WTC11 (cell line): ENCODE measurements at regions of chr1 and their contacts with region 1.

Region 1: GRCh38 chr1:245045087-245045881 is 109.5 kb upstream of the KIF26B start:
- DNase-seq: peak; percentile 17
- ATAC-seq: peak; percentile 66
- H3K4me3 Mint-ChIP-seq: no peak overlapping the region
- H3K27ac Mint-ChIP-seq: peak overlapping the region; percentile 33; the same call in 1 of the 2 replicates
- H3K4me1 Mint-ChIP-seq: peaks cover 36% of the 10 kb centered on the region
- H3K27me3 Mint-ChIP-seq: no peaks in the 10 kb centered on the region
- CTCF ChIP-seq: no peak

Region 2: DNA sequence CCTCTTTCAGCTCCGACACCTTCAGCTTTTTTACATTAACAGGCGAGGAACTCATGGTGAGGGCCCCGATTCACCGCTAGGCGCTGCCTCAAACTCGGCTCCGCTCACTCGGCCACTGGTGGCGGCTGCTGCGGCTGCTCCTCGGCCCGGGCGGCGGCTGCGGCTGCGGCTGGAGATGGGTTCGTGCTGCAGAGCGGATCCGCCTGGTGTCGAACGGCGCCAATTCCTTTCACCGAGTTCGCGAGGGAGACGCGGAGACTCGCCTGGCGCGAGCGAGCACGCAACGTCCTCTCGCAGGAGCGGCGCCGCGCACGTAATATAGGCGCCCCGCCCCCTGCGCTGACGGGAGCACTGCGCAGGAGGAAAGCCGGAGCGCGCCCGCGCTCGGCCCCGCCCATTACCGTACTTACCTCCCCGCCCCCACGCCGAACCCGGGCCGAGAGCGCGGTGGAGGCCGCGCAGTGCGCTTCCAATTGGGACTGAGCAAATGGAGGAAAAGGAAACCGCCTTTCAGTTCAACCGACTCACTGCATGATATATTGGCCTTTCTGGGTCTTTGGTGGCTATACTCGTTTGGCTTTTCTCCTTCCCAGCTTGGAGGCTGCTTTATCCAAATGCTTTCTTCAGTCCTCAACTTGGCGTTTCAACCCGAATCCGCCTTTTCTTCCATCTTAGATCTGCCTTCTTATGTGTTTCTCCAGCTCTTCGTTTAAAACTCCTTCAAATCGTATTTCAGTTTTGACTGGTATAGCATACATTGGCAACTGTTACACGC is 180.8 kb before region 1 on chr1 and contains the start of gene HNRNPU:
- CTCF ChIA-PET with region 1: interaction called, 37 read pairs
- POLR2A ChIA-PET with region 1: interaction called, 3 read pairs
- DNase-seq: peak; percentile 97
- ATAC-seq: peak; percentile 86
- H3K4me3 Mint-ChIP-seq: peak within 1 kb of the TSS; percentile 87
- H3K27ac Mint-ChIP-seq: peak within 1 kb of the TSS; percentile 99
- H3K4me1 Mint-ChIP-seq: peaks cover 48% of the 10 kb centered on the region
- H3K27me3 Mint-ChIP-seq: no peaks in the 10 kb centered on the region
- CTCF ChIP-seq: no peak; the same call in 1 of the 2 replicates
- total RNA-seq, gene HNRNPU: 477 to 536 TPM (median 477 TPM) in 3 replicates

Region 3: DNA sequence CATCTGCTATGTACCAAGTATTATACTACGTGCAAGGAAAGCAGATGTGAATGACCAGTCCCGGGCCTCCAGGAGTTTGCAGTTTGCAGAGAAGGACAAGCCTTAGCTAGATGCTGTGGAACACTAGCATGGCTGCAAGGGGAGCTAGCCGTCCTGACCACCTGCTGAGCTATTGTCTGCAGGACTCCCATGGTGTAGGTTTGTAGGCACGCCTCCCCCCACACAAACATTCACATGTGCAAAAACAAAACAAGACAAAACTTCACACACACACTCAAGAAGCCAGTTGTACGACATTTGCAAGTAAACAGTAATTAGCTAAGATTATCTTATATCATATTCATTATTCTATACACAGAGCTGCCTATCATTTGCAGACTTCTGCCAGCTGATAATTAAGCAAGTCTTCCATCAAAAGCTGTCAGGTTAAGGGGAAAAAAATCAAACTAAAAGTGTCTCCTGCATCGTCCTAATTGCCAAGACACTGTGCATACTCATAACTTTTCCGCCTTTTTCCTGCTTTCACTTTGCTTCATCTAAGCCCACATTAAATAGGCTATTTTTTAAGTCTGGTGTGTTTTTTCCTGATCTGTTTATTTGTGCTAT is 170.2 kb before region 1 on chr1:
- CTCF ChIA-PET with region 1: interaction called, 13 read pairs
- POLR2A ChIA-PET with region 1: no interaction called
- DNase-seq: peak; percentile 80
- ATAC-seq: peak; percentile 75
- H3K4me3 Mint-ChIP-seq: no peak overlapping the region
- H3K27ac Mint-ChIP-seq: no peak overlapping the region
- H3K4me1 Mint-ChIP-seq: peaks cover 17% of the 10 kb centered on the region
- H3K27me3 Mint-ChIP-seq: no peaks in the 10 kb centered on the region
- CTCF ChIP-seq: no peak

Region 4: DNA sequence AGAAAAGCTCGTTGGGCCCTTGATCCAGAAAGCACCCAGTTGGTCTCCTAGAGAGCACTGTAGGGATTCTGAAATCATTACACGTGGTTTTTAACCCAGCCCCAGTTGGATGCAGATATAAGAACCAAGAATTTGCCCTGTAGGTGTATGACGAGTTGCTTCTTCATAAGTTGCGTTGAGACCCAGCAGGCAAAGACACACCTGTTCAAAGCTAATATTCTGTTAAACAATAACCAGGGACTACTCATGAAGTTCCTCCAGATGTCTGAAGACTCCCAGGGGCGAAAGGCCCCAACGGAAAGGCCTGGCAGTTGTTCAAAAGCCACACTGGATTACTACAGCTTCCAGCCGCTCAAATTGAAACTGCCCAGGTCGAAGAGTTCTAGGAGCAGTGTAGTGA is 92.3 kb before region 1 on chr1:
- CTCF ChIA-PET with region 1: no interaction called
- POLR2A ChIA-PET with region 1: no interaction called
- DNase-seq: no peak
- ATAC-seq: no peak
- H3K4me3 Mint-ChIP-seq: no peak overlapping the region
- H3K27ac Mint-ChIP-seq: no peak overlapping the region
- H3K4me1 Mint-ChIP-seq: 0 out of 2 replicates have a peak, but pooled peaks cover 3% of the 10 kb centered on the region
- H3K27me3 Mint-ChIP-seq: no peaks in the 10 kb centered on the region
- CTCF ChIP-seq: no peak

Region 5: GRCh38 chr1:244964112-244964971 is 80.9 kb before region 1 on chr1:
- CTCF ChIA-PET with region 1: interaction called, 11 read pairs
- POLR2A ChIA-PET with region 1: no interaction called
- DNase-seq: no peak
- ATAC-seq: peak; percentile 45; the same call in 1 of the 2 replicates
- H3K4me3 Mint-ChIP-seq: no peak overlapping the region
- H3K27ac Mint-ChIP-seq: no peak overlapping the region
- H3K4me1 Mint-ChIP-seq: peaks cover 38% of the 10 kb centered on the region
- H3K27me3 Mint-ChIP-seq: no peaks in the 10 kb centered on the region
- CTCF ChIP-seq: no peak

Region 6: DNA sequence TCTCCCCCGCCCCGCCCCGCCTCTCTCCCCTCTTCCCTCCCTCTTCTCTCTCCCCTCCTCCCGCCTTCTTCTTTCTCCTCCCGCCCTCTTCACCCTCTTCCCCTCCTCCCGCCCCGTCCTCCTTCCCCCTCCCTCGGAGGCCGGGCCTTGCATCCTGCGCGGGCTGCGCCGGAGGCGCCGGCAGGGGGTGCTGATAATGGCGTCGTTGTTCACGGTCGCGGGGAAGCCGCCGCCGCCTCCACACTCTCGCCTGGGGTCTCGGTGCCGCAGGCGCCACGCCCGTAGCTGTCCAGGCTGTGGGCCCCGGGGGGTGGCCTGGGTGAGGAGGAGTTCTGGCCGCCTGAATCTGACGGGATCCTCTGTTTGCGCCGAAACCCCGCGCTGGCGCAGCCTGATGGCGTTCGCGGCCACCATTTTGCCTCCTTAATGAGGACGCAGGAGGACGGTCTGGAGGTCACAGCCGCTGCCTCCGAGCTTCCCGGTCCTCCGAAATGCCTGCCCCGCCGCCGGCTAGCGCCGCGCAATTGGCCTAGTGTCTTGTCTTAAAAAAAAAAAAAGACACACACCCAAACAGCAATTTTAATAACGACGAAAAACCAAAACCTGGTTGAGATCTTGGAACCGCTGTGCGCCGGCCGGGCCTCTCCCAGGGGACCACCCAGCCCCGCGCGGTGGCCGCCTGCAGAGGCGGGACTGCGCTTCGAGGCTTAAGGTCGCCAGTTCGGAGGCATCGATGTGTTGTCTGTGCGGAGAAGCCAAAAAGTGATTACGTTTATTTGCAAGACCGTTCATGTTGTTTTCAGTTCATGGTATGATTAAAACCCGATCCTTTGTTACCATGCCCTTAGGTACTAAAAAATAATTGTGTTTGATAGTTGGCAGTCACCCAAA is 74.4 kb before region 1 on chr1:
- CTCF ChIA-PET with region 1: interaction called, 11 read pairs
- POLR2A ChIA-PET with region 1: no interaction called
- DNase-seq: peak; percentile 94
- ATAC-seq: peak; percentile 68
- H3K4me3 Mint-ChIP-seq: peak overlapping the region; percentile 84
- H3K27ac Mint-ChIP-seq: peak overlapping the region; percentile 100
- H3K4me1 Mint-ChIP-seq: peaks cover 32% of the 10 kb centered on the region
- H3K27me3 Mint-ChIP-seq: no peaks in the 10 kb centered on the region
- CTCF ChIP-seq: 0 out of 2 replicates have a peak, but pooled peaks have one; percentile 21

Region 7: DNA sequence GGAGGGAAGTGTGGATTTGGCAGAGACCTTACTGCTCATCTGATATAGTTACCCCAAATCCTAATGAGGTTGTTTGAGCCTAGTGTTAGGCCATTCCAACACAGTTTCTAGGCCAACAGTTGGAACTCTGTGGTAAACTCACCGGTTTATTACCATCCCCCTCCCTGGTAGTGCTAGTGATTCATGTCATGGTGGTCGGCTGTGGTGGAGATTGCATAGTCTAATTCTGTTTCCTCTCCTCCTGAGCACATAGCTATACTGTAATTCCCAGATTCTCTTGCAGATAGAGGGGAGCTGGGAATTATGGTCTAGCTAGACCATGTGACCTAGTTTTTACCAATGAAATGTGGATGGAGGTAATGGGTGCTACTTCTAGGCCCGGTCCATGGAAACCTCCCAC is 14.2 kb before region 1 on chr1:
- CTCF ChIA-PET with region 1: interaction called, 15 read pairs
- POLR2A ChIA-PET with region 1: no interaction called
- DNase-seq: no peak
- ATAC-seq: no peak
- H3K4me3 Mint-ChIP-seq: no peak overlapping the region
- H3K27ac Mint-ChIP-seq: no peak overlapping the region
- H3K4me1 Mint-ChIP-seq: peaks cover 13% of the 10 kb centered on the region
- H3K27me3 Mint-ChIP-seq: no peaks in the 10 kb centered on the region
- CTCF ChIP-seq: no peak